Transverse colon (tissue), 4 donors: ENCODE measurements at regions of chr9 and their contacts with region 1.

Region 1: DNA sequence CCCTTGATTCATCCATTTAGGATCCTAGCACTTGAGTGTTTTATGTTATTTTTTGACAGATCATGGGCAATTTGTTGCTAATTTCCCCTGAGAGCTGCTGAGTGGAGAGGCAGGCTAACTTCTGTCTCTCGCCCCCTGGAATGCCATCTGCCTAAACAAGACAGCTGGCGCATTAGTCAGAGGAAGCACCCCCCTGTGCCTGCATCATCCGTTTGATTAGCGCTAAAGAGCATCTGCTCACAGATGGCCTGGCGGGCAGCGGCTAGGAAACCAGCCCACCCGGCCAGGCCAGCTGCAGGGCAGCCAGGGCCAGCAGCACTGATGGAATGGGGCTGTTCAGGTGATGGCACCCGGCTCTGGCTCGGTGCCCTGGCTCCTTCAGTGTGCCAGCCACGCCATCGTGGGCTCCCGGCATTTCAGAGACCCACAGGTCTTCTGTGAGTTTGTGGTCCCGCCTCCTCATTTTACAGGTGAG is 22.9 kb upstream of the ASS1 start:
- DNase-seq: no peak
- H3K4me3 ChIP-seq: no peak overlapping the region
- H3K27ac ChIP-seq: no peak overlapping the region
- H3K4me1 ChIP-seq: peaks cover 0 to 15% (median under 1%) of the 10 kb centered on the region in 4 donors
- H3K27me3 ChIP-seq: no peaks in the 10 kb centered on the region
- CTCF ChIP-seq: no peak
- EP300 ChIP-seq: no peak
- POLR2A ChIP-seq: no peak

Region 2: DNA sequence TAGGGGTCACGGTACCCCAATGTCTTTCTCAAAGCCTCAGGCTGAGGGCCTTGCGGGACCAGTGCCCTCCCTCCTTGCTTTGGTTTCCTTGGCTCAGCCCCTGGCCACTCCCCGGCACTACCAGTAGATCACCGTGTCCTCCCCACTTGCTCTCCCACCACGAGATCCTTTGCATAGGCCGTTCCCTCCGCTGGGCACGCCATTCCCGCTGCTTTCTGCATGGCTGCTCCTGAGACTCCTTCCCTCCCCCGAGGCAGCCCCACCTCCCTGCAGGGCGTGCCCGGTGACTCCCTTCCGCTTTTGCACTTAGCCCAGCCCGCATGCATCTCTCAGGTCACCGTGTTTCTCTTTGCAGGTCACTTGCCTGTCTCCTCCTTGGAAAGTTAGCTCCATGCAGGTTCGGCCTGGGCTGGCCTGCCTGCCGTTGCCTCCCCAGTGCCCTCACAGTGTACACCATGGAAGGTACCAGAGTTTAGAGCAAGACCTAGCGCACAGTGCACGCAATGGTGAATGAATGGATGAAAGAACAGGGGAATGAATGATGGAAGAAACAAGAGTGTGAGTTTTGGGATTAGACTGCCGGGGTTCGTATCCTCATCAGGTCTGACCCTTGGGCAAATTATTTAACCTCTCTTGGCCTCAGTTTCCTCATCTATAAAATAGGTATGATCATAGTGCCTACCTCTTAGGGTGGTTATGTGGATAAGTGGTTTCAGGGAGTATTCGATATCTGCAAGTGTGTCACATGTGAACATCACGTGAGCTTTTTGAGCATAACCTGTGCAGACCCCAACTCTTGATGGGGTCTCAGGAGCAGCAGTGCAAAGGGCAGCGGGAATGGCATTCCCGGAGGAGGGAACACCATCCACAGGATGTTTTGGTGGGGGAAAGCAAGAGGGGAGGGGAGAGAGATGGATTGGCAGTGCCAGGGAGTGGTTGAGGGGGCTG is 1015.3 kb before region 1 on chr9:
- in situ Hi-C with region 1: no loop called
- intact Hi-C with region 1: no loop called
- DNase-seq: peak; percentile 85
- H3K4me3 ChIP-seq: no peak overlapping the region
- H3K27ac ChIP-seq: peak overlapping the region in 1 of 4 donors; percentile 7
- H3K4me1 ChIP-seq: peaks cover 12 to 27% (median 19%) of the 10 kb centered on the region in 4 donors
- H3K27me3 ChIP-seq: no peaks in the 10 kb centered on the region
- CTCF ChIP-seq: no peak
- EP300 ChIP-seq: no peak
- POLR2A ChIP-seq: peak; percentile 12

Region 3: GRCh38 chr9:130351343-130351742 is 70.5 kb before region 1 on chr9:
- in situ Hi-C with region 1: no loop called
- intact Hi-C with region 1: loop called (anchors 2 kb)
- DNase-seq: no peak
- H3K4me3 ChIP-seq: no peak overlapping the region
- H3K27ac ChIP-seq: peak overlapping the region in 3 of 4 donors; percentile 43 to 70 (median 51)
- H3K4me1 ChIP-seq: peaks cover 0 to 8% (median 3%) of the 10 kb centered on the region in 4 donors
- H3K27me3 ChIP-seq: no peaks in the 10 kb centered on the region
- CTCF ChIP-seq: no peak
- EP300 ChIP-seq: no peak
- POLR2A ChIP-seq: no peak

Region 4: GRCh38 chr9:130629443-130630090 is 207.7 kb after region 1 on chr9:
- in situ Hi-C with region 1: no loop called
- intact Hi-C with region 1: no loop called
- DNase-seq: no peak
- H3K4me3 ChIP-seq: no peak overlapping the region
- H3K27ac ChIP-seq: no peak overlapping the region
- H3K4me1 ChIP-seq: no peaks in the 10 kb centered on the region
- H3K27me3 ChIP-seq: no peaks in the 10 kb centered on the region
- CTCF ChIP-seq: no peak
- EP300 ChIP-seq: no peak
- POLR2A ChIP-seq: no peak